ENCODE measurements at regions of chr15 and their contacts with region 1.

Region 1: GRCh38 chr15:81531109-81531592 is 157.1 kb upstream of the TMC3 start:
- DNase-seq: peak; percentile 98
- H3K4me3 ChIP-seq: peak overlapping the region in 1 of 3 experiments; percentile 11
- H3K27ac ChIP-seq: peak overlapping the region; percentile 70
- H3K4me1 ChIP-seq: peaks cover 26% of the 10 kb centered on the region
- H3K27me3 ChIP-seq: no peaks in the 10 kb centered on the region
- CTCF ChIP-seq: no peak
- POLR2A ChIP-seq: peak; percentile 67

Region 2: DNA sequence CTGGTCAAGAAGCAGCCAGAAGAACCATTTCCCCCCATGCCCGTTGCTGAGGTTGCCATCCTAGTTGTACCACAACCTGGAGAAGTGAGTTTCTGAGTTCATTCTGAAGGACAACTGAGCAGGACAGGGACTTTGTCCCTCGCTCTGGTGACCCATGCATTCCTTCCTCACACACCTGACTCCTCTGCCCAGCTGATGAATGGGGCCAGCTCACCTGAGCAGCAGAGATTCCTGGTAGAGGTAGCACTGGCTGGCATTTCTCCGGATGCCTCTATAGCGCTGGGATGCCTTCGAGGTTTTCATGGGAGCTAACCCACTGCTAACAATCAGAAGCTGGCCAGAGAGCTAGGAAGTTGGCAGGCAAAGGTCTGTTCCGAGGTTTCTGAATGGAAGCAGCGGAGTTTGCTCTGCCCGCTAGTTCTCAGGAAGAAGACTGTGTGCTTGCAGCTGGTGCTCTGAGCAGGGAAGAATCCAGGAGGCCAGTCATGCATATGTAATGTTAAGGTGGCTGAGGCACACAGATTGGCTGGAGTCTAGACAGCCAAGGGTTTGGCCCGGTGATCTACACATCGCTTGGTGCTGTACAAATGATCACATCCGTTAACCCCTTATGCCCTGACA is 157.3 kb before region 1 on chr15 and contains the start of gene TMC3:
- CTCF ChIA-PET with region 1: no interaction called
- POLR2A ChIA-PET with region 1: no interaction called
- dilution Hi-C with region 1: no loop called
- intact Hi-C with region 1: no loop called
- DNase-seq: no peak
- H3K4me3 ChIP-seq: no peak within 1 kb of the TSS
- H3K27ac ChIP-seq: no peak within 1 kb of the TSS
- H3K4me1 ChIP-seq: no peaks in the 10 kb centered on the region
- H3K27me3 ChIP-seq: peaks cover 0 to 3% of the 10 kb centered on the region in 2 experiments
- CTCF ChIP-seq: no peak
- POLR2A ChIP-seq: no peak
- total RNA-seq, gene TMC3: not detected in 2 replicates

Region 3: GRCh38 chr15:81575436-81576123 is 44.4 kb after region 1 on chr15:
- CTCF ChIA-PET with region 1: interaction called, 4 read pairs
- POLR2A ChIA-PET with region 1: no interaction called
- dilution Hi-C with region 1: no loop called
- intact Hi-C with region 1: loop called (anchors 5 kb)
- DNase-seq: peak; percentile 93
- H3K4me3 ChIP-seq: no peak overlapping the region
- H3K27ac ChIP-seq: no peak overlapping the region
- H3K4me1 ChIP-seq: peaks cover 14% of the 10 kb centered on the region
- H3K27me3 ChIP-seq: peaks cover 6 to 8% of the 10 kb centered on the region in 2 experiments
- CTCF ChIP-seq: no peak
- POLR2A ChIP-seq: no peak

Measured in endothelial cell of umbilical vein (primary cell).